ENCODE measurements at regions of chr11 and their contacts with region 1.

Region 1: GRCh38 chr11:123054301-123055065 is 7.5 kb downstream of the HSPA8 start:
- DNase-seq: no peak

Region 2: GRCh38 chr11:122863704-122864326 is 190.7 kb before region 1 on chr11:
- intact Hi-C with region 1: loop called (anchors 1 kb)
- DNase-seq: peak in 9 of 10 donors; percentile 33 to 92 (median 56)

Region 3: DNA sequence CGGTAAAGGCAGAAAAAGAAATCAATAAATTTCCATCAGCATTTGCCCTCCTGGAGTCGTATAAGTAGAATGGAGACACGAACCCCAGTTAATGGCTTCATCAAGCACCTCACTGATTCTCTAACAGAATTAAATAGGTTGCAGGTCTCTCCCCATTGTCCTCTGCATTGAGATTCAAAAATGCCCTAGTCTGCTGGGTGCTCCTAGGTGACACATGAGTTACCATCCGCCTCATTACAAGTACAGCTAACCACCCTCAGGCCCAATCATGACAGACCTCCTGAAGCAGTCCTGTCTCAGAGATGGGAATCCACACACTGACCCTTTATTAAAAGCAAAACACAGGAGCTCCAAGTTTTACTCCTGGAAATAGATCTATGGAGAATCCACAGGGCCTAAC is 24.0 kb before region 1 on chr11:
- intact Hi-C with region 1: no loop called
- DNase-seq: no peak